ENCODE measurements at regions of chr4 and their contacts with region 1.

Region 1: GRCh38 chr4:109559983-109560686 is at the start of gene MCUB:
- DNase-seq: peak; percentile 69
- ATAC-seq: peak; percentile 97
- H3K4me3 ChIP-seq: peak within 1 kb of the TSS; percentile 67 to 79 (median 69)
- H3K27ac ChIP-seq: peak within 1 kb of the TSS; percentile 17
- H3K4me1 ChIP-seq: peaks cover 12% of the 10 kb centered on the region
- H3K27me3 ChIP-seq: no peaks in the 10 kb centered on the region
- CTCF ChIP-seq: no peak
- EP300 ChIP-seq: no peak
- POLR2A ChIP-seq: no peak
- RAD21 ChIP-seq: no peak
- total RNA-seq, gene MCUB: 0.95 and 1.4 TPM in 2 replicates

Region 2: GRCh38 chr4:108742451-108743420 is 817.4 kb before region 1 on chr4:
- CTCF ChIA-PET with region 1: no interaction called
- POLR2A ChIA-PET with region 1: no interaction called
- in situ Hi-C with region 1: no loop called
- intact Hi-C with region 1: no loop called
- DNase-seq: no peak
- ATAC-seq: peak; percentile 69; the same call in 2 of the 3 replicates
- H3K4me3 ChIP-seq: no peak overlapping the region
- H3K27ac ChIP-seq: no peak overlapping the region
- H3K4me1 ChIP-seq: peaks cover 11% of the 10 kb centered on the region
- H3K27me3 ChIP-seq: no peaks in the 10 kb centered on the region
- CTCF ChIP-seq: no peak; the same call in 1 of the 2 replicates
- EP300 ChIP-seq: no peak
- POLR2A ChIP-seq: no peak
- RAD21 ChIP-seq: no peak

Region 3: GRCh38 chr4:109648266-109648996 is 88.3 kb after region 1 on chr4:
- CTCF ChIA-PET with region 1: no interaction called
- POLR2A ChIA-PET with region 1: no interaction called
- in situ Hi-C with region 1: no loop called
- intact Hi-C with region 1: loop called (anchors 10 kb)
- DNase-seq: no peak
- ATAC-seq: no peak
- H3K4me3 ChIP-seq: no peak overlapping the region
- H3K27ac ChIP-seq: no peak overlapping the region
- H3K4me1 ChIP-seq: no peaks in the 10 kb centered on the region
- H3K27me3 ChIP-seq: no peaks in the 10 kb centered on the region; a peak in 1 of 5 replicates
- CTCF ChIP-seq: no peak
- EP300 ChIP-seq: no peak
- POLR2A ChIP-seq: no peak
- RAD21 ChIP-seq: no peak

Region 4: GRCh38 chr4:109729718-109730618 is 169.8 kb after region 1 on chr4 and contains the start of gene PLA2G12A:
- CTCF ChIA-PET with region 1: no interaction called
- POLR2A ChIA-PET with region 1: no interaction called
- in situ Hi-C with region 1: no loop called
- intact Hi-C with region 1: loop called (anchors 10 kb)
- DNase-seq: peak; percentile 68
- ATAC-seq: peak; percentile 96
- H3K4me3 ChIP-seq: peak within 1 kb of the TSS; percentile 79 to 91 (median 88)
- H3K27ac ChIP-seq: peak within 1 kb of the TSS; percentile 81
- H3K4me1 ChIP-seq: peaks cover 25% of the 10 kb centered on the region
- H3K27me3 ChIP-seq: no peaks in the 10 kb centered on the region; a peak in 2 of 5 replicates
- CTCF ChIP-seq: no peak
- EP300 ChIP-seq: no peak
- POLR2A ChIP-seq: peak; percentile 45 to 79; a peak in 2 of 4 replicates
- RAD21 ChIP-seq: peak; percentile 46; the same call in 1 of the 2 replicates
- total RNA-seq, gene PLA2G12A: 38.7 and 61.2 TPM in 2 replicates

Measured in HepG2 (cell line).